GM10248 (cell line): ENCODE measurements at regions of chr19 and their contacts with region 1.

Region 1: GRCh38 chr19:6021878-6022569 is 44.1 kb upstream of the RANBP3 start:
- DNase-seq: peak; percentile 88
- CTCF ChIP-seq: peak; percentile 85

Region 2: GRCh38 chr19:5803752-5804515 is 218.1 kb before region 1 on chr19:
- CTCF ChIA-PET with region 1: interaction called, 48 read pairs
- POLR2A ChIA-PET with region 1: no interaction called
- DNase-seq: peak; percentile 96
- CTCF ChIP-seq: peak; percentile 98

Region 3: GRCh38 chr19:5953680-5954213 is 68.3 kb before region 1 on chr19:
- CTCF ChIA-PET with region 1: interaction called, 20 read pairs
- POLR2A ChIA-PET with region 1: no interaction called
- DNase-seq: no peak
- CTCF ChIP-seq: no peak

Region 4: GRCh38 chr19:5977785-5978605 is 44.0 kb before region 1 on chr19 and contains the start of gene RANBP3:
- CTCF ChIA-PET with region 1: interaction called, 66 read pairs
- POLR2A ChIA-PET with region 1: no interaction called
- DNase-seq: peak; percentile 100
- CTCF ChIP-seq: no peak

Region 5: DNA sequence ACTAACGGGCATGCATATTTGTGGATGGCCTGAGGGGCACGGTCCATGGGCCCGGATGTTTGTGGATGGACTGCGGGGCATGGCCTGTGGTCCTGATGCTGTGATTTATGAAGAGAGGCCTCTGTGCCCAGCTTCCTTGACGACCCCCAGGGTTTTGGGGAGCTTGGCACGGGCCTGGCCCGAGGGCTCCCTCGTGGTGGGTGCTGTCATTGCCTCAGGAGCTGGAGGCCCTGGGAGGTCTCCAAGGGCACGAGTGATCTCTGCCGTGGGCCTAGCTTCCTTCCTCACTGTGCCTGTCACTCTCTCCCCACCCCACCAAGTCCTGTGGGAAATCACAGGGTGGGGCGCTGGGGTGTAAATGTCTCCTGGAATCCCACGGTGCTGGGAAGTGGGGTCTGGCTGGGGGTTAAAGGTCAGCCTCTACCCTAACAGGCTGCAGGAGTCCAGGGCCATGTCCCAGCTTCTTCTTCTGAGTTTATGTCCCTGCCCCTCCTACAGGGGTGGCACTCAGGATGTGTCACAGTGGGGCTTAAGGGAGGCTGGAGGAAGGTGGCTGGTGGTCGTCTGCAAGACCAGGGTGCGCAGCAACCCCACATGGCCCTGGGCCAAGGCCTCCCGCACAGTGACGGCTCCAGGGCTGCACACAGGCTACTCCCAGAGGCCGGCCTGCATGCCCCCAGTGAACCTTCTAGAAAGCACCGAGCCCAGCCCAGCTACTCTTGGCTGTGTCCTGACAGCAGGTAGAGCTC is 16.5 kb before region 1 on chr19:
- CTCF ChIA-PET with region 1: interaction called, 17 read pairs
- POLR2A ChIA-PET with region 1: no interaction called
- DNase-seq: no peak
- CTCF ChIP-seq: no peak

Region 6: GRCh38 chr19:6048808-6049405 is 26.9 kb after region 1 on chr19:
- CTCF ChIA-PET with region 1: interaction called, 11 read pairs
- POLR2A ChIA-PET with region 1: no interaction called
- DNase-seq: peak; percentile 89
- CTCF ChIP-seq: peak; percentile 93